ENCODE measurements at regions of chr1 and their contacts with region 1.

Region 1: DNA sequence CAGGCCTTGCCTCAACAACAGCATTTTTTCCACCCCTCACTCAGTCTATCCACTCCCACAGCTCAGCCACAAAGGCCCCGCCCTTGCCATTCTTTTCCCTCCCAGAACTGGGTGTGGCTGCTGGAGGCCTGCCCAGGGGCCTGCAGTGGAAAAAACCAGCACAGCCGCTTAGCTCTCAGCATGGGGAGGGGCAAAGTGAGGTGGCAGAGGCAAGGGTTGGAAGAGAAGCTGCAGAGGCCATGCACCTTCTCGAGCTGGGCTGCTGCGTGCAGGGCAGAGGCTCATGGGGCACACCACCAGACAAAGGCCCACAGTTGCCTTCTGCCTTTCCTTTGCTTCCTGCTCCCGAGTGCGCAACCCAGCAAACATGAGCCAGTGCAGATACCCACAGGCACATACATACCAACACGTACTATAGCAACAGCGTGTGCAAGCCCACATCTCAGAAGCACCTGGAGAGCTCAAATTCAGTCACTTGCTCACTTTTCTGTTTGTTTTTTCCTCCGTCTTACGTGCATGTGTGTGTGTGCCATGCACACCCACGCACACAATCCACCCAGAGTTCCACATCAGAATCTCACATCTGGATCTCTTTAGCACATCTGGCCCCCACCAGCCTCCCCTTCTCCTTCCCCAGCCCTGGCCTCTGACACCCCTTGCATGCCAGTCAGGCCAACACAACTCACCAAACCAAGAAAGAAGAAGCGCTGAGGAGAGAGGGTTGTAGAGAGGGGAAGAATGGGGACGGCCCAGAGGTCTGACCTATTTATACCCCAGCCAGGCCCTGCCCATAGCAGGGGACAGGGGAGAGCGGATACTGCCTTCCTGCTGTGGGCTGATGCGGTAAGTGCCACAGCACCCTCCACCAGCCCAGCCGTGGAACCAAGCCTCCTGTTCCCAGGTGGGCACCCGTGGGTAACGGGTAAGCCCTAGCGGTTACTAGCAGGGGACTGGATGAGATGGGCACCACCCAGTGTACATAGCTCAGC is at the start of gene S100A4:
- DNase-seq: peak; percentile 95
- H3K27ac ChIP-seq: peak within 1 kb of the TSS; percentile 96
- CTCF ChIP-seq: no peak

Region 2: DNA sequence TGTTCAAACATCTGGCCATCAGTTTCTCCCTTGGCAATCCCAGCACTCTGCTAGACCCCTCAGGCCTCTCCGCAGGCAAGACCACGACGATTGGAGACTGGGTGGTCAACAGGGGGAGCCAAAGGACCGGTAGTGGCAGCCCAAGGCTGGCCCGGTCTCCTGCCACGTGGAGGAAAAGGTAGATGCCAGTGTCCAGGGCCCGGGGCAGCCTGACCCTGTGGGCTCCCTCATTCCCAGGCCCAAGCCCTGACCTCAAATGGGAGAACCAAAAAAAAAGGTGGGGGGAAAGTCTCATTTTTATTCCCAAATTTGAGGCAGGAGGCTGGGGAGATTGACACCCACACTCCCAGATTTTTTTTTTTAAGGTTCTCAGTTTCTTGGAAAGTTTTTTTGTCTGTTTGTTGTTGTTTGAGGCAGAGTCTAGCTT is 34.4 kb before region 1 on chr1:
- CTCF ChIA-PET with region 1: interaction called, 10 read pairs
- POLR2A ChIA-PET with region 1: no interaction called
- DNase-seq: peak; percentile 85
- H3K27ac ChIP-seq: peak overlapping the region; percentile 55
- CTCF ChIP-seq: peak; percentile 93

Measured in RWPE1 (cell line).